ENCODE measurements at regions of chr7 and their contacts with region 1.

Region 1: DNA sequence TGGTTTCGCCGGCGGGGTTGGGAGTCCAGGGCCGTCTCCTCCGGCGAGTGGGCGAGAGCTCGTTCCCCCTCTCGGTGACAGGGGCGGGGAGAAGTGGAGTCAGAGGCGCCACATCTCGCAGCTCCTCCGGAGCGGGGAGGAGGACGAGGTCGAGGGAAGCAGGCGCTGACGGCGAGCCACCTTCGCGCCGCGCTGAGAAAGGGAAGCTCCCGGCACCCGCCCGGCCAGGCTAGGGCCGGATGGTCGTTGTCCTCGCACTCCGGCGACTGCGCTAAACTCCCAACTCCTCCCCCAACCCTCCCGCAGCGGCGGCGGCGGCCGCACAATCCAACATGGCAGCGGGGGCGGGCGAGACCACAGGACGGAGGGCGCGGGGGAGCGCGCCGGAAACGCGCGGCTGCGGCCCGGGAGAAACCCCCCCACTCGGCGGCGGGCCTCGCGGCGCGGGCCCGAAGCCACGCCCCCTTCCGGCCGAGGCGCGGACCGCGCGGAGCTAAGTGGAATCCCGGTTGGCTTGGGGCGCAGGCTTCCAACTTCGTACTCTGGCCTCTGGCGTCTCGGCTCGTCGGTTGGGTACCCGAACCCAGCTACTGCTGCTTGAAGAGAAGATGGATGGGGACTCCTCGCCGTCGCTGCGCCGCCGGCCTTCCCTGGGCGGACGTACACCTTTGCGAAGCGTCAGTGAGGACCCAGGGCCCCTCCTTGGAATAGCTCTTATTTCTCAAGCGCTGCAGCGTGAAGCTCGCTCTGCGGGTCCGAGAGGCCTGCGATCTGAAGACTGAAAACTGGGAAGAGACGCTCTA is at the start of gene WASL:
- DNase-seq: peak; percentile 87 to 91
- ATAC-seq: peak; percentile 79 to 80
- H3K4me3 ChIP-seq: peak within 1 kb of the TSS; percentile 75 to 97 (median 91)
- H3K27ac ChIP-seq: peak within 1 kb of the TSS; percentile 96 to 99 (median 99)
- H3K4me1 ChIP-seq: peaks cover 50 to 51% of the 10 kb centered on the region in 2 donors
- H3K27me3 ChIP-seq: no peaks in the 10 kb centered on the region
- CTCF ChIP-seq: peak in 3 of 5 experiments; percentile 21 to 37 (median 32)
- POLR2A ChIP-seq: peak; percentile 97 to 98
- total RNA-seq, gene WASL: 29.0 to 40.4 (median 33.0) TPM

Region 2: GRCh38 chr7:123534383-123535260 is 214.3 kb before region 1 on chr7 and contains the start of gene IQUB:
- in situ Hi-C with region 1: loop called in 1 of 4 experiments (anchors 10 kb)
- intact Hi-C with region 1: loop called (anchors 2 kb)
- DNase-seq: peak; percentile 98
- ATAC-seq: peak; percentile 92 to 93
- H3K4me3 ChIP-seq: peak within 1 kb of the TSS; percentile 67 to 76 (median 72)
- H3K27ac ChIP-seq: peak within 1 kb of the TSS; percentile 89 to 93 (median 92)
- H3K4me1 ChIP-seq: peaks cover 9 to 17% of the 10 kb centered on the region in 2 donors
- H3K27me3 ChIP-seq: peaks cover 0 to 5% (median 2%) of the 10 kb centered on the region in 3 donors
- CTCF ChIP-seq: no peak
- POLR2A ChIP-seq: peak; percentile 47 to 50
- total RNA-seq, gene IQUB: 0.15 to 0.42 (median 0.26) TPM in 3 of 4 donors, not detected in the other

Region 3: DNA sequence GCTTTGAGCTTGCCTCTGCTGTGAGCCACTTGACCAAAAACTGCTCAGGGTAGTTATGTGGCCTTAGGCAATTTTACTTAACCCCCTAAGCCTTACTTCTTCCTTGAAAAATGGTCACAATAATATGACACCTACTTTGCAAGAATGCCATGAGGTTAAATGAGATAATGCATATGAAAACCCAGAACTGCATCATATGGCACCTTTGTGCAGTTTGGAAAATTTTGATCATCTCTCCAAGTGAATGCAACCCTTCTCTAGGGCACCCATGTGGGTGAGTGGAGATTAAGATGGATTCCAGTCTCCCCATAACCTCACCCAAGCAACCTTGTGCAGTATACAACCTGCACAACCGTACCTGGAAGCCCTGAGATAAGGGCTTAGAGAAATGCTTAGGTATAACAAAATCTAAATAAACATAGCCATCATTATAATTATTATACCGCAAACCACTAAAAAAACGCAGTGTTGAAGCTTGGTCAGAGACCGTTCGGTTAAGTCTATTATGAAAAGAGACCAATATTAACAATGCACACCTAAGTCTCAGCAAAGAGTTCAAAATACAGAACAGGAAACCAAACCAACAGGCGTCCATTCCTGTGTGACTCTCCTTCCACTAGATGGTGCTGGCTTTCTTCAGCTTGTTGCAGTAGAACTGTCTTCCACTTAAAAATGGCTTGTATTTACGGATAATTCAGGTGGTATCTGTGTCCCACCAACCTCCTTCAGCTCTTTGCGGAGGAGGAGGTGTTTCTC is 168.4 kb before region 1 on chr7:
- in situ Hi-C with region 1: no loop called
- intact Hi-C with region 1: loop called (anchors 5 kb)
- DNase-seq: no peak
- ATAC-seq: peak; percentile 85 to 91
- H3K4me3 ChIP-seq: peak overlapping the region in 1 of 4 donors; percentile 29
- H3K27ac ChIP-seq: peak overlapping the region; percentile 11 to 71 (median 44)
- H3K4me1 ChIP-seq: peaks cover 14 to 29% of the 10 kb centered on the region in 2 donors
- H3K27me3 ChIP-seq: no peaks in the 10 kb centered on the region
- CTCF ChIP-seq: peak; percentile 45 to 80 (median 54)
- POLR2A ChIP-seq: no peak

Region 4: GRCh38 chr7:123643495-123644441 is 105.2 kb before region 1 on chr7:
- in situ Hi-C with region 1: no loop called
- intact Hi-C with region 1: loop called (anchors 5 kb)
- DNase-seq: peak; percentile 74 to 81
- ATAC-seq: peak; percentile 62 to 72
- H3K4me3 ChIP-seq: peak overlapping the region; percentile 23 to 46 (median 34)
- H3K27ac ChIP-seq: peak overlapping the region; percentile 82 to 96 (median 87)
- H3K4me1 ChIP-seq: peaks cover 69 to 76% of the 10 kb centered on the region in 2 donors
- H3K27me3 ChIP-seq: no peaks in the 10 kb centered on the region
- CTCF ChIP-seq: no peak
- POLR2A ChIP-seq: peak; percentile 51 to 80

Region 5: DNA sequence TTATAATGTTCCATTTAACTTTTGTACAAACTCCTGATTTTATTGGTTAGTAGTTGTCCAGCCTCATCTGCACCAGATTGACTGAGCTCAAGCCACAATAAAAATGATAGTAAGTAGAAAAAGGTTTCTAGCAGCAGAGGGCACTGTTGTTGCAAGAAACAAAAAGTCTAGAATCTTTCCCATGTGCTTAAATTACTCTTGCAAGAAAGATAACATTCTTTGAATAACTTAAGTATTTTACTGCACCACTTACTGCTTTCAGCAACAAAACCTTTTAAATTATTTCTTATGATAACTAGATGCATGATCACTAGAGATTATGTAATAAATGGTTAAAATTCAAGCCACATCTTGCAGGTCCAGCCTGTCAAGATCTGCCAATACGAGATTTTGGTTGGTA is 66.2 kb before region 1 on chr7:
- in situ Hi-C with region 1: no loop called
- intact Hi-C with region 1: loop called (anchors 5 kb)
- DNase-seq: no peak
- ATAC-seq: no peak
- H3K4me3 ChIP-seq: no peak overlapping the region
- H3K27ac ChIP-seq: peak overlapping the region in 3 of 4 donors; percentile 75 to 85 (median 82)
- H3K4me1 ChIP-seq: peaks cover 47% of the 10 kb centered on the region in 2 donors
- H3K27me3 ChIP-seq: no peaks in the 10 kb centered on the region
- CTCF ChIP-seq: peak; percentile 35 to 59 (median 45)
- POLR2A ChIP-seq: no peak